ENCODE measurements at regions of chr7 and their contacts with region 1.

Region 1: DNA sequence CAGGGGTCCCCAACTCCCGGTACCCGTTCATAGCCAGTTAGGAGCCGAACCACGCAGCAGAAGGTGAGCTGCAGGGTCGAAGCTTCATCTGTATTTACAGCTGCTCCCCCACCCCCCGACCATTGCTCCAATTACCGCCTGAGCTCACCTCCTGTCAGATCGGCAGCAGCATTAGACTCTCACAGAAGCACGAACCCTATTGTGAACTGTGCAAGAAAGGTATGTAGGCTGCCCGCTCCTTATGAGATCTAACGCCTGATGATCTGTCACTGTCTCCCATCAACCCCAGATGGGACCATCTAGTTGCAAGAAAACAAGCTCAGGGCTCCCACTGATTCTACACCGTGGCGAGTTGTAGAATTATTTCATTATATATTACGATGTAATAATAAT is 14.6 kb upstream of the AZGP1 start:
- DNase-seq: no peak
- H3K4me3 ChIP-seq: peak overlapping the region in 3 of 4 experiments; percentile 31 to 50 (median 38); a peak in 6 of 8 replicates
- H3K27ac ChIP-seq: no peak overlapping the region
- H3K4me1 ChIP-seq: peaks cover 0 to 4% (median 2%) of the 10 kb centered on the region in 4 experiments; a peak in 3 of 7 replicates
- H3K27me3 ChIP-seq: no peaks in the 10 kb centered on the region; a peak in 1 of 7 replicates
- CTCF ChIP-seq: no peak
- EP300 ChIP-seq: no peak
- POLR2A ChIP-seq: no peak
- RAD21 ChIP-seq: no peak

Region 2: GRCh38 chr7:99910976-99911375 is 79.5 kb before region 1 on chr7:
- CTCF ChIA-PET with region 1: interaction called, 241 read pairs
- POLR2A ChIA-PET with region 1: interaction called, 7 read pairs
- DNase-seq: no peak
- H3K4me3 ChIP-seq: no peak overlapping the region
- H3K27ac ChIP-seq: no peak overlapping the region
- H3K4me1 ChIP-seq: no peaks in the 10 kb centered on the region
- H3K27me3 ChIP-seq: no peaks in the 10 kb centered on the region
- CTCF ChIP-seq: no peak
- EP300 ChIP-seq: no peak
- POLR2A ChIP-seq: no peak
- RAD21 ChIP-seq: no peak

Region 3: DNA sequence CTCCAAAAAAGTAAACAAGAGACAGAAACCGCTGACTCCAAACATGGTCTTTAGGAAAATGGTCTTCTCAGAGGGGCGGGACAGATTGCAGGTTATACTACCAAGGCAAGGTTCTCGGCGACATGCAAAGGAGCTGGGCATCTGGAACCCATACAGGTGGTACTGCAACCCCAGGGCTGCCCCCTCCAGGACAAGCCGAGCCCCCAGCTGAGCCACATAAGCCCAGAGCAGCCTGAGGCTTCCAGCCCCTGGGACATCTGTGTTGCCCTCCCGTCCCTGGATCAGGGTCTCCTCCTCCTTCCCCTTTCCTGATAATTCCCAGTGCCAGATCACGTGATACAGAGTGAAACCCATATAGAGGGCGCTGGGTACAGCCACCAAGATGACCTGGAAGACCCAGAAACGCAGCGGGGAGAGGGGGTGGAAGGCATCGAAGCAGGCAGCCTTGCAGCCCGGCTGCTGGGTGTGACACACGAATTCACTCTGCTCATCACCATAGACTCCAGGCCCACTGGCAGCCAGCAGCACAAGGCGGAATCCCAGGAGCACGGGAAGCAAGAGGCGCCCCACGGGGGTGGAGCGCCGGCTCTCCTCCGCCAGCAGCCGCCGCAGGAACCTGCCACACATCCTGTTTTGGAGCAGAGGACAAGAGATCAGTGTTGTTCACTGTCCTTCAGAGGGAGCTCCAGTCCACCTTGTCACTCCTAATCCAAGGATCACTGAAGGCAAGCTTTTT is 61.3 kb before region 1 on chr7 and contains the start of gene GJC3:
- CTCF ChIA-PET with region 1: interaction called, 27 read pairs
- POLR2A ChIA-PET with region 1: no interaction called
- DNase-seq: peak in 1 of 2 experiments; percentile 82
- H3K4me3 ChIP-seq: peak within 1 kb of the TSS; percentile 22 to 49 (median 26); a peak in 7 of 8 replicates
- H3K27ac ChIP-seq: 0 out of 2 replicates have a peak within 1 kb of the TSS, but pooled peaks have one; percentile 16
- H3K4me1 ChIP-seq: peaks cover 2 to 7% (median 4%) of the 10 kb centered on the region in 4 experiments; a peak in 5 of 7 replicates
- H3K27me3 ChIP-seq: no peaks in the 10 kb centered on the region
- CTCF ChIP-seq: peak; percentile 36 to 58 (median 57)
- EP300 ChIP-seq: no peak
- POLR2A ChIP-seq: peak in 1 of 2 experiments; percentile 40; a peak in 1 of 3 replicates
- RAD21 ChIP-seq: peak; percentile 64 to 75
- total RNA-seq, gene GJC3: 2.5 and 3.0 TPM in 2 replicates

Region 4: DNA sequence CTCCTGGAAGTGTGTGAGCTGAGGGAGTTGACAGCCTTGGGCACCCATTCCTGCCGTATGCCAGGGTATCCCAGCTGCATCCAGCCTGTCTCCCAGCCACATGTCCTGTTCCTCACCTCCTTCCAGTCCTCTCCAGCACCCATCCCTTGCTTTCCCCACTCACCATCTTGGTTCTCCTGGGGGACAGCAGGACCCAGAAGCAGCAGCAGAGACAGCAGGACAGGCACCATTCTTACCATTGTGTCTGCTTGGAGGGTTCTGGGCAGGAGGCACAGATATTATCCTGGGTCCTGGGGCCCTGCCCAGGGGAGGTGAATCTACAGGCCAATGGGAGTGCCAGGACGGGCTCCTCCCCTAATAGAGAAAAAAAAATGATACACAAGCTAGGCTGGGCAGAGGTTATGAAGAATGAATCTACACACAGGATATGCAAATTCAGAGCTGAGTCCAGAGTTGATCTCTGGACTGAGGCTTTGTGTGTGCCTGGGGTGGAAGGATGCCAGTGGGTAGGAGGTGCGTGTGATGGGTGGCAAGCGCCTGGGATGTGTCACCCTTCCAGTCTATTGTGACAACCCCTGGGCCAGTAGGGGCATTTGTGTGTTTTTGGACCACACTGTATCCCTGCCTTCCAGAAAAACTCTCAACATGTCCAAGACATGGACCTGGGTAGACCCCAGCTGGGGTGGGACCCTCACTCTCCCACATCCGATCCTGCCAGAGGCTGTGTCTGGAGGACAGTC is 14.5 kb before region 1 on chr7 and contains the start of gene AZGP1:
- CTCF ChIA-PET with region 1: interaction called, 97 read pairs
- POLR2A ChIA-PET with region 1: interaction called, 3 read pairs
- DNase-seq: no peak
- H3K4me3 ChIP-seq: no peak within 1 kb of the TSS
- H3K27ac ChIP-seq: no peak within 1 kb of the TSS
- H3K4me1 ChIP-seq: peaks cover 0 to 4% (median under 1%) of the 10 kb centered on the region in 4 experiments; a peak in 1 of 7 replicates
- H3K27me3 ChIP-seq: no peaks in the 10 kb centered on the region
- CTCF ChIP-seq: no peak
- EP300 ChIP-seq: no peak
- POLR2A ChIP-seq: no peak
- RAD21 ChIP-seq: no peak
- total RNA-seq, gene AZGP1: 0.29 and 0.52 TPM in 2 replicates

Region 5: DNA sequence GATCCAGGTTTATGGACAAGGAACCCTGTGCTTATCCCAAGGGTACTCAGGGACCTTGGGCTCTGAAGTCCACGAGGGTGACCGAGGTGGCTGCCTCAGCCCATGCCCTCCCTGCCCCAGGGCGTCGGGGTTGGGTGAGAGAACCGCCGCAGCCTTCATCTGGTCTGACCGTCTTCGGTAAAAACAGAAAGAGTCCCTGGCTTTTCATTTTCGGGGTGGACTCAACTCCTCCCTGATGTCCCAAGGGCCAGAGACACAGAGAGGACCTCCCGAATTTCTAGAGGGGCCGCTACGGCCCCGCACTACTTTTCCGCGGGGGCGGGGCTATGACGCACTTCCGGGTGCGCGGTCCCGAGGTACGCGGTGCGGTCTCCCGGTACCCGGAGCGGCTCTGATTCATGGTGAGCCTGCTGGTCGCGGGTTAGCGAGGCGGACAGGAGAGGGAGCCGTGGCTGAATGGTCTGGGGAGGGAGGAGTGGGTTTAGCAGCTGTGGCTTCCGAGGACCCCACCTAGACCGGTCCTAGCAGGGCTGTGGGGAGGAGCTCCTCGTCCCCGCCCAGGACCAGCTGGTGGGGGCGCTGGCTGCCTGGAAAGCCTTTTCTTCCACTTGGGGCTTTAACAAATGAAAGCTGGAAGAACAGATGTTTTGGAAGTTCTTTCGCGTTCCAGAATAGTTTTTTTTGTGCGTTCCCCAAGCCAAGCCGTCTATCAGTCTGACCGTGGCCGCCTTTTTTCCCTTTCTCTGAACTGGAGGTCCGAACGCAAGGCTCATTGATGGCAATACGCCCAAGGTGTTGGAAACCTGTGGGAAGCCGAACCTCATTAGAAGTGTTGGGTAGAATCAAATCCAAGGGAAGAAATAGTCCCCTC is 59.2 kb after region 1 on chr7 and contains the start of gene ZSCAN21:
- CTCF ChIA-PET with region 1: interaction called, 12 read pairs
- POLR2A ChIA-PET with region 1: interaction called, 3 read pairs
- DNase-seq: peak; percentile 34 to 95
- H3K4me3 ChIP-seq: peak within 1 kb of the TSS; percentile 79 to 98 (median 86)
- H3K27ac ChIP-seq: peak within 1 kb of the TSS; percentile 86
- H3K4me1 ChIP-seq: peaks cover 0 to 3% (median 0%) of the 10 kb centered on the region in 4 experiments; a peak in 3 of 7 replicates
- H3K27me3 ChIP-seq: peaks cover 0 to 1% (median 0%) of the 10 kb centered on the region in 4 experiments; a peak in 1 of 7 replicates
- CTCF ChIP-seq: peak in 1 of 3 experiments; percentile 7; a peak in 1 of 4 replicates
- EP300 ChIP-seq: no peak
- POLR2A ChIP-seq: peak; percentile 84 to 94
- RAD21 ChIP-seq: no peak
- total RNA-seq, gene ZSCAN21: 25.4 and 26.1 TPM in 2 replicates

Region 6: DNA sequence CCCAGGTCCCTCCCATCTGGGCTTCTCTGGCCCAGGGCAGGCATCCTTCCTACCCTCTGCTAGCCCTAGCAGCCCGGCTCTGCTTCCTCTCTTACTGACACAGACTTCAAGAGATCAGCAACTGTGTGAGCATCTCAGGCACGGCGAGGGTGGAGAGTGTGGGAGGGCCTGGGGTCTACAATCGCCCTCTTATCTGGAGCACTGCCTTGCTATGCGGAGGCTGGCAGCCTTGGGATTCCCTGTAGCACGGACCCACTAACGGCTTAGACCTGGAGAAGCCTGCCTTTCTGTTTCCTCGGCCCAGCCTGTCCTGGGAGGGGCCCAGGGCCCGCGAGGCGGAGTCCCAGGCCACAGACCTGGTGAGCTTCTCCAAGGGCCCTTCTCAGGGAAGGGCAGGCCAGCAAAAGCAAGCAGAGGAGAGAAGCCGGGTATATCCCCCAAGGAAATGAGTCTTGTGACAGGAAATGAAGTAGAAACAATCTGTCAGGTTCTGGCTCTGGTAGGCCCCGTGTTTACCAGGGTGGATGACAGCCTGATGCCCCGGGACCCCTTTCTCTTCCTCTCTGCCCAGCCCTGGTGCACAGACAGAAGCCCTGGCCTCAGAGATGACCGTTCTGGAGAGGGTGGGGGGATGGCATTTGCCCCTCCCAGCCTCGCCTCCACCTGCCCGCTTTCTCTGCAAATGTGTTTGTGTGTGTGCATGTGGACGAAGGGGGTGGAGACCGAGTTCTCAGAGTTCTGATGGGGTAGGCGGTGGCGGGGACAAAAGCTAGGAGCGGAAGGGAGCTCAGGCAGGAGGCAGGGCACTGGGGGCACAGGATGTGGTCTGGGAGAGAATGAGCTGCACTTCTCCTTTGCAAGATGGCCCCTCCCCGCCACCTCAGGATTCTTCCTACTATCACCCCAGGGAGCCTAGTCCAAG is 592.9 kb after region 1 on chr7:
- CTCF ChIA-PET with region 1: no interaction called
- POLR2A ChIA-PET with region 1: no interaction called
- DNase-seq: no peak
- H3K4me3 ChIP-seq: peak overlapping the region in 2 of 4 experiments; percentile 4 to 80; a peak in 4 of 8 replicates
- H3K27ac ChIP-seq: peak overlapping the region; percentile 29
- H3K4me1 ChIP-seq: peaks cover 0 to 22% (median 13%) of the 10 kb centered on the region in 4 experiments; a peak in 6 of 7 replicates
- H3K27me3 ChIP-seq: peaks cover 0 to 2% (median 0%) of the 10 kb centered on the region in 4 experiments; a peak in 1 of 7 replicates
- CTCF ChIP-seq: no peak
- EP300 ChIP-seq: no peak
- POLR2A ChIP-seq: no peak
- RAD21 ChIP-seq: no peak

Measured in H1 (cell line).